Activated CD4-positive, alpha-beta T cell treated with anti-CD3 and anti-CD28 coated beads for 36 hours (primary cell): ENCODE measurements at regions of chr17 and their contacts with region 1.

Region 1: GRCh38 chr17:51461578-51462004 is 201.2 kb downstream of the UTP18 start:
- DNase-seq: peak; percentile 74
- ATAC-seq: peak; percentile 74
- H3K4me3 Mint-ChIP-seq: no peak overlapping the region
- H3K27ac Mint-ChIP-seq: no peak overlapping the region
- H3K4me1 Mint-ChIP-seq: peaks cover 3% of the 10 kb centered on the region
- H3K27me3 Mint-ChIP-seq: peaks cover 4% of the 10 kb centered on the region

Region 2: GRCh38 chr17:51472670-51473205 is 11.1 kb after region 1 on chr17:
- CTCF ChIA-PET with region 1: interaction called, 18 read pairs
- POLR2A ChIA-PET with region 1: no interaction called
- intact Hi-C with region 1: no loop called
- DNase-seq: no peak
- ATAC-seq: no peak
- H3K4me3 Mint-ChIP-seq: no peak overlapping the region
- H3K27ac Mint-ChIP-seq: no peak overlapping the region
- H3K4me1 Mint-ChIP-seq: no peaks in the 10 kb centered on the region
- H3K27me3 Mint-ChIP-seq: no peaks in the 10 kb centered on the region

Region 3: GRCh38 chr17:51640108-51640622 is 178.6 kb after region 1 on chr17:
- CTCF ChIA-PET with region 1: interaction called, 6 read pairs
- POLR2A ChIA-PET with region 1: no interaction called
- intact Hi-C with region 1: loop called in 1 of 2 experiments (anchors 2 kb)
- DNase-seq: peak; percentile 39
- ATAC-seq: no peak
- H3K4me3 Mint-ChIP-seq: no peak overlapping the region
- H3K27ac Mint-ChIP-seq: no peak overlapping the region
- H3K4me1 Mint-ChIP-seq: no peaks in the 10 kb centered on the region
- H3K27me3 Mint-ChIP-seq: peaks cover 16% of the 10 kb centered on the region

Region 4: GRCh38 chr17:51734462-51734861 is 272.9 kb after region 1 on chr17:
- CTCF ChIA-PET with region 1: no interaction called
- POLR2A ChIA-PET with region 1: no interaction called
- intact Hi-C with region 1: loop called in 1 of 2 experiments (anchors 10 kb)
- DNase-seq: peak; percentile 48
- ATAC-seq: no peak
- H3K4me3 Mint-ChIP-seq: no peak overlapping the region
- H3K27ac Mint-ChIP-seq: no peak overlapping the region
- H3K4me1 Mint-ChIP-seq: no peaks in the 10 kb centered on the region
- H3K27me3 Mint-ChIP-seq: peaks cover 17% of the 10 kb centered on the region